ENCODE measurements at regions of chr11 and their contacts with region 1.

Region 1: DNA sequence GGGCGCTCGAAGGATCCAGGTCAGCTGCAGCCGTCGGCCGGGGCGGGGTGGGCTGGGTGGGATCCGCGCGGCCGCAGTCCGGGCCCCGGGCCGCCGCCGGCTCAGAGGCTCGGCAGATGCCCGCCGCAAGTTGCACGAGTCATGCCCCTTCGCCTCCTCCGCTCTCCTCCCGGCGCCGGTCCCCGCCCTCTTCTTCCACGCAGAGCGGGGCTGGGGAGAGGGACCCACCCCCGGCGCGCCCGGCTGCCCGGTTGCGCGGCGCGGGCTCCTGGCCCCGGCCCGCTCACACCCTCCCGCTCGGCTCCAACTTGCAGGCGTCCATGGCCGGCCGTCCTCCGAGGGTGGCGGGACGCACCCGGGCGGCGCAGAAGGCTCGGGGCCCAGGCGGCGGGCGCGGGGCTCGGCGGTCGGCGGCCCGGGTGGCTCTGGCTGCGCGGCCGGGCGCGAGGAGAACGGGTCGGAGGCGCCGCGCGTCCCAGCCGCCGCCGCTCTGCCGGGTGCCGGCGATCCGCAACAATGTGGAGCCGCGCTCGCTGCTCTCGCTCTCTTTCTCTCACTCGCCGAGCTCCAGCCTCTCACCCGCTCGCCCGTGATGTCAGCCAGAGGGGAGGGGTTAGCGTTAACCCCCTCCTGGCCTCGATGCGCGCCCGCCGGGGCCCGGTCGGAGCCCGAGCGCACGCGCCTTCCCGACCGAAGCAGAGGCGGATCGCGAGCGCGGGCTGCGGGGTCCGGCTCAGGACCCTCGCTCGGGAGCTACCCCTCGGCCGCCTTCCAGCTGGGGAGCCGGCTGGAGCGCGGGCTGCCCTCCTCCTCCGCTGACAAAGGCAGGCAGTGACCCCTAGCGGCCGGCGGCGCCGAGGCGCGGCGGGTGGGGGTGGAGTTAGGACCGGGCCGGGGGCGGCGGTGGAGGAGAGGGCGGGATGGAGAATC is at the start of gene NECTIN1:
- DNase-seq: peak; percentile 92 to 97
- ATAC-seq: peak; percentile 95
- H3K4me3 ChIP-seq: peak within 1 kb of the TSS; percentile 45 to 82
- H3K27ac ChIP-seq: peak within 1 kb of the TSS; percentile 29 to 49
- H3K4me1 ChIP-seq: no peaks in the 10 kb centered on the region
- H3K27me3 ChIP-seq: no peaks in the 10 kb centered on the region
- total RNA-seq, gene NECTIN1: 5.5 to 7.1 TPM

Region 2: DNA sequence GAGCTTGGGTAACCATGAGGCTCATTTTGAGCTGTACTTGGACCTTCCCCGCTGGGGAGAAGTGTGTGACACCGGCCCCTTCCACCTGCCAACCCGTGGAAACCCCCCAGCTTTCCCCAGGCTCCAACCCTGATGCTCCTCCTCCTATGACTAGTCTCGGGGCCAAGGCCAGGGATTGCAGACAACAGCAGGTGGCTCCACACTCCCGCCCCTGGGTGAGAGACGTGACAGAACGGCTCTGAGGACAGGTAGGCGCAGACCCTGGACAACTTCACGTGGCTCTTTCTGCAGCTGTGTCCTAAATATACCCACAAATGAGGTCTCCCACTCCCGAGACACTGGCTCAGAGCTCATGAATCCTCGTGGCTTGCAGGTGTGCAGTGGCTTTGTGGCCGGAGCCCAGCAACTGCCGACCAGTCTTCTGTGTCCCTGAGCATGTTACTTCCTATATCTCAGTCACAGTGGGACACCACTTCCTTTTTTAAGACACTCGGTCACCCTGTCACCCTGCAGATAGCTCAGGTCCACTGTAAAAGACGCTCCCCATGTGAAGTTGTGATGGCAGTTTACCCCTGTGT is 55.1 kb before region 1 on chr11:
- intact Hi-C with region 1: loop called (anchors 5 kb)
- DNase-seq: no peak
- ATAC-seq: no peak
- H3K4me3 ChIP-seq: no peak overlapping the region
- H3K27ac ChIP-seq: no peak overlapping the region
- H3K4me1 ChIP-seq: no peaks in the 10 kb centered on the region
- H3K27me3 ChIP-seq: no peaks in the 10 kb centered on the region

Region 3: DNA sequence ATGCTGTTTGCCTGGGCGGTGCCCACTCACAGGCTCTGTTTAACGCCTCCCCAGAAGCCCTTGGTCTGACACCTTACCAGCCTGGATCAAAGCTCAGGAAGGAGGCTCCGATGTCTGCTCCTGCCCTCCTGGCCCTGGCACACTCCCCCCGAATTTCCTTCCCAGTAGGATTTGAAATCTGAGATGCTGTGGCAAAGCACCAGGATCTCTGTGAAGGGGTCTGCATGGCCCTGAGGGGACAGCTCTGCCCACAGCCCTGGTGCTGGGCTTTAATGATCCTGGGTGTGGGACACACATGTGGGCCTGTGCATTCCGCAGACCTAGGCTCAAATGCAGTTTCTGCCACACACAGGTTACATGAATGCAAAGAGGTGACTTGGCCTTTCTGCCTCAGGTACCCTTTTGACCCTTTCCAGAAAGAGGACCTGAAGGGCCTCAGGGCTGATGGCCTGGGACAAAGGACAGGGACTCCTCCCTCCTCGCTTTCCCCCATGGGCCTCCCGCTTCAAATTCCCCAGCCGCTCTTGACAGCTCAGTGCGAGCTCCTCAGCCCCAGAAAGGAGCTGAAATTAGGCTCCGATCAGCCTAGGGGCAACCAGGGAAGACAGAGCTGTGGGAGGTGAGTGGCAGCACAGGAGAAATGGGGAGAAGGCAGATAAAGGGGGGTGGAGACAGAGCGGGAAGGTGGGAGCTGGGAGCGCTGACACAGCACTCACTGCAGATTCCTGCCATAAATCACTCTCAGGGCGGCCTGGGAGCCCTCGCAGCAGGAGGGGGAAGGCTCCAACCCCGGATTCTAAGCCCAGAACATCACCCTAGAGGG is 367.7 kb after region 1 on chr11:
- intact Hi-C with region 1: loop called in 1 of 2 experiments (anchors 10 kb)
- DNase-seq: peak; percentile 34 to 43
- ATAC-seq: no peak
- H3K4me3 ChIP-seq: no peak overlapping the region
- H3K27ac ChIP-seq: no peak overlapping the region
- H3K4me1 ChIP-seq: peaks cover 0 to 5% of the 10 kb centered on the region in 2 donors
- H3K27me3 ChIP-seq: no peaks in the 10 kb centered on the region

Region 4: GRCh38 chr11:120281143-120281795 is 552.4 kb after region 1 on chr11:
- intact Hi-C with region 1: no loop called
- DNase-seq: no peak
- ATAC-seq: no peak
- H3K4me3 ChIP-seq: no peak overlapping the region
- H3K27ac ChIP-seq: no peak overlapping the region
- H3K4me1 ChIP-seq: no peaks in the 10 kb centered on the region
- H3K27me3 ChIP-seq: no peaks in the 10 kb centered on the region